CD4-positive, alpha-beta T cell (primary cell): ENCODE measurements at regions of chr17 and their contacts with region 1.

Region 1: DNA sequence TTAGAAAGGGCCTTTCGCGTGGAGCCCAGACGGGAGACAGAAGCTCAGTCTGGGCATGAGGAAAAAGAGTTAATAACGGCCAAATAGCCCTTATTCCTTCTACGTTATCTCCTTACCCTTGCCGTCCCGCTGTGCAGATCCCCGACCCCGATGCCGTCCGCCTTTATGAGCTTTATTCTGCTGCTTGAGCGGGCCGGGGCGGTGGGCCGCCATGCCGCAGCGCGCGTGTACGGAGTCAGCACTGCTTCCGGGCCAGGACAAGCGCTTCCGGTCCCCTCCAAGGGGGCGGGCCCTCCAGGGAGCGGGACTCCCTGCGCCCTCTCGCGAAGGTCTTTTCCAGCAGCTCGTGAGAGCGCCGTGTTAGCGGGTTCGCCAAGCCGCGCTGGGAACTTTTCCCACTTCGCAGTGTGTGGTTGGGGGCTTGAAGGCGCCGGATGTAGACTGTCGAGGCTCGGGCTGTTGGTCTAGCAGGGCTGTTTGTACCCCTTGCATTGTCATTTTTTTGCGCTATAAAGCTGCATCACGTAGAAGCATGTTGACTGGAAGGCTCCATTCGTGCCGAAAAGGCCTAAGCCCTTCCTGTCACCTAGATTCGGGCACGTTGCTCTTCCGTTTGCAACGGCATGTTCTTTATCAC is at the start of gene TSR1:
- DNase-seq: peak; percentile 79 to 94 (median 86)
- ATAC-seq: peak; percentile 83
- H3K4me3 ChIP-seq: peak within 1 kb of the TSS; percentile 91
- H3K4me3 Mint-ChIP-seq: no peak within 1 kb of the TSS
- H3K27ac ChIP-seq: peak within 1 kb of the TSS; percentile 70 to 78
- H3K27ac Mint-ChIP-seq: peak within 1 kb of the TSS; percentile 94
- H3K4me1 ChIP-seq: peaks cover 30% of the 10 kb centered on the region
- H3K4me1 Mint-ChIP-seq: peaks cover 30% of the 10 kb centered on the region
- H3K27me3 ChIP-seq: no peaks in the 10 kb centered on the region
- H3K27me3 Mint-ChIP-seq: no peaks in the 10 kb centered on the region
- CTCF ChIP-seq: peak; percentile 30
- total RNA-seq, gene TSR1: 29.6 to 31.9 TPM

Region 2: GRCh38 chr17:2070241-2071023 is 265.9 kb before region 1 on chr17:
- CTCF ChIA-PET with region 1: no interaction called
- POLR2A ChIA-PET with region 1: no interaction called
- intact Hi-C with region 1: no loop called
- DNase-seq: peak in 1 of 14 experiments; percentile 42
- ATAC-seq: peak; percentile 69
- H3K4me3 ChIP-seq: no peak overlapping the region
- H3K4me3 Mint-ChIP-seq: no peak overlapping the region
- H3K27ac ChIP-seq: no peak overlapping the region
- H3K27ac Mint-ChIP-seq: peak overlapping the region; percentile 12
- H3K4me1 ChIP-seq: peaks cover 38% of the 10 kb centered on the region
- H3K4me1 Mint-ChIP-seq: peaks cover 4% of the 10 kb centered on the region
- H3K27me3 ChIP-seq: no peaks in the 10 kb centered on the region
- H3K27me3 Mint-ChIP-seq: peaks cover 5% of the 10 kb centered on the region
- CTCF ChIP-seq: no peak

Region 3: DNA sequence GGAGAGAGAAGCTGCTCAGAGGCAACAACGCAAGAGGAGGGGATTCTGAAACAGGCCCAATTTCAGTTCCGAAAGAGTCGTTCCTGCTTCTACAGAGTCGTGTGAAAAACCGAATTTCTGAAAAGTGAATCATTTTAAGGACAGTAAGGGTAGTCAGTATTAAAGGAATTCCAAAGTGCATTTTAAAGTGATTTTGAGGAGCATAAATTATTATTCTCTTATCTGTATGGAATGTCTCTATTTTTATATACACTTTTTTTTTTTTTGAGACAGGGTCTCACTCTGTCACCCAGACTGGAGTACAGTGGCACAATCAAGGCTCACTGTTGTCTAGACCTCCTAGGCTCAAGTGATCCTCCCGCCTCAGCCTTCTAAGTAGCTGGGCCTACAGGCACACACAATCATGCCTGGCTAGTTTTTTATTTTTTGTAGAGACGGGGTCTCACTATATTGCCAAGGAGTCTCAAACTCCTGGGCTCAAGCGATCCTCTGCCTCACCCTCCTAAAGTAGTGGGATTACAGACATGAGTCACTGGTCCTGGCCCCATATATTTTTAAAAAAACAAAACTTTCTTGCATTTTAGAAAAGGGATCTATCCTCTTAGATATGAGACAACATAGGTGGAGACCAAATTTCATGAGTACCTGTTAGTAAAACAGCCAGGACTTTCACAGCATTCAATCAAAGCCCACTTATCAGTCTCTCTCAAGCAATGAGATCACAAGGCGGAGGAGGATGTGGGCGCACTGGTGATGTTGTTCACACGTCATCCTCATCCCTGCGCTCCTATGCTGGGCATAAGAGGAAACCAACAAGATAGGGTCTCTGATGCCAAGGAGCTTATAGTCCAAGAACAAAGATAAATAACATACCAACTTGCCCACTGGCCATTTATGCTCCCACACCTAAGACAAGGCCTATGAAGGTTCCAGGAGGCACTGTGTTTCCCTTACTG is 85.9 kb before region 1 on chr17:
- CTCF ChIA-PET with region 1: no interaction called
- POLR2A ChIA-PET with region 1: no interaction called
- intact Hi-C with region 1: no loop called
- DNase-seq: peak in 8 of 14 experiments; percentile 19 to 70 (median 54)
- ATAC-seq: peak; percentile 78
- H3K4me3 ChIP-seq: no peak overlapping the region
- H3K4me3 Mint-ChIP-seq: peak overlapping the region; percentile 1
- H3K27ac ChIP-seq: no peak overlapping the region
- H3K27ac Mint-ChIP-seq: peak overlapping the region; percentile 78
- H3K4me1 ChIP-seq: peaks cover 25% of the 10 kb centered on the region
- H3K4me1 Mint-ChIP-seq: peaks cover 57% of the 10 kb centered on the region
- H3K27me3 ChIP-seq: no peaks in the 10 kb centered on the region
- H3K27me3 Mint-ChIP-seq: no peaks in the 10 kb centered on the region
- CTCF ChIP-seq: no peak

Region 4: GRCh38 chr17:2279707-2280106 is 56.6 kb before region 1 on chr17:
- CTCF ChIA-PET with region 1: no interaction called
- POLR2A ChIA-PET with region 1: no interaction called
- intact Hi-C with region 1: no loop called
- DNase-seq: no peak
- ATAC-seq: no peak
- H3K4me3 ChIP-seq: no peak overlapping the region
- H3K4me3 Mint-ChIP-seq: peak overlapping the region; percentile 11
- H3K27ac ChIP-seq: no peak overlapping the region
- H3K27ac Mint-ChIP-seq: peak overlapping the region; percentile 67
- H3K4me1 ChIP-seq: peaks cover 28% of the 10 kb centered on the region
- H3K4me1 Mint-ChIP-seq: peaks cover 58% of the 10 kb centered on the region
- H3K27me3 ChIP-seq: no peaks in the 10 kb centered on the region
- H3K27me3 Mint-ChIP-seq: no peaks in the 10 kb centered on the region
- CTCF ChIP-seq: no peak

Region 5: GRCh38 chr17:2303204-2304188 is 32.8 kb before region 1 on chr17 and contains the starts of genes SMG6 and SRR:
- CTCF ChIA-PET with region 1: no interaction called
- POLR2A ChIA-PET with region 1: interaction called, 50 read pairs
- intact Hi-C with region 1: loop called in 1 of 2 experiments (anchors 1 kb)
- DNase-seq: peak; percentile 91 to 98 (median 95)
- ATAC-seq: peak; percentile 91
- H3K4me3 ChIP-seq: peak within 1 kb of the TSS; percentile 94
- H3K4me3 Mint-ChIP-seq: peak within 1 kb of the TSS; percentile 98
- H3K27ac ChIP-seq: peak within 1 kb of the TSS; percentile 52 to 84
- H3K27ac Mint-ChIP-seq: peak within 1 kb of the TSS; percentile 90
- H3K4me1 ChIP-seq: peaks cover 30% of the 10 kb centered on the region
- H3K4me1 Mint-ChIP-seq: peaks cover 55% of the 10 kb centered on the region
- H3K27me3 ChIP-seq: no peaks in the 10 kb centered on the region
- H3K27me3 Mint-ChIP-seq: no peaks in the 10 kb centered on the region
- CTCF ChIP-seq: no peak
- total RNA-seq, gene SMG6: 39.3 to 39.7 TPM
- total RNA-seq, gene SRR: 2.5 to 2.8 TPM

Region 6: DNA sequence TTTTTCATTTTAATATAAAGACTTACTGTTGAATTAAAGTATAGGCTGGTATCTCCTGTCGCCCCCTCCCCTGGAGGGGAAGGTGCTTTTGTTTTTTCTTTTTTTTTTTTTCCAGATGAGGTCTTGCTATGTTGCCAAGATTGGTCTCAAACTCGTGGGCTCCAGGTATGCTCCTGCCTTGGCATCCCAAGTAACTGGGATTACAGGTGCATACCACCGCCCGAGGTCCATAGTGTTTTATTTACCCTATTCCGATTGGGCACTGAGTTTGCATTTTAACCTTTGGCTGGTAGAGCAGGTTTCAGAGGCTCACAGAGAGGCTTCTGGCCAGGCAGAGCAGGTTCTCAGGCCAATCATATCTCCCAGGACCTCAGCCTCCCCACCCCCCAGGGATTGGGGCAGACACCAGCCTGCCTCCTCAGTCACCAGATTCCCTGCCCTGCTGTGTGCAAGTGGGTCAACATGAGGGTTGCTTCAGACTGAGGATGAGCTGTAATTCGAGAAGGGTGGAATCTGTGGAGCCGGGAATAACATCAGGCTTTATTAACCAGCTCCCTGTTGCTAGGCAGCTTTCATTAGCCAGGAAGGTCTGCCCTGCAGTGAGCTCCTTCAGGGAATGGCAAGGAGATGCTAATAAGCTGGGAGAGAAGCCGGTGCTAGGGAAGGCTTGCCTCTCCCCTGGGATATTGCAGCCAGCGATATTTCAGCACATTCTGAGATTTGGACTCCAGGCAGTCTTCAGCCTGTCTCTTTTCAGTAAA is 11.4 kb after region 1 on chr17:
- CTCF ChIA-PET with region 1: interaction called, 18 read pairs
- POLR2A ChIA-PET with region 1: interaction called, 48 read pairs
- intact Hi-C with region 1: no loop called
- DNase-seq: no peak
- ATAC-seq: no peak
- H3K4me3 ChIP-seq: no peak overlapping the region
- H3K4me3 Mint-ChIP-seq: no peak overlapping the region
- H3K27ac ChIP-seq: no peak overlapping the region
- H3K27ac Mint-ChIP-seq: no peak overlapping the region
- H3K4me1 ChIP-seq: peaks cover 8% of the 10 kb centered on the region
- H3K4me1 Mint-ChIP-seq: peaks cover 6% of the 10 kb centered on the region
- H3K27me3 ChIP-seq: no peaks in the 10 kb centered on the region
- H3K27me3 Mint-ChIP-seq: no peaks in the 10 kb centered on the region
- CTCF ChIP-seq: no peak

Region 7: GRCh38 chr17:2354311-2354710 is 18.0 kb after region 1 on chr17:
- CTCF ChIA-PET with region 1: interaction called, 18 read pairs
- POLR2A ChIA-PET with region 1: interaction called, 48 read pairs
- intact Hi-C with region 1: loop called (anchors 1 kb)
- DNase-seq: no peak
- ATAC-seq: no peak
- H3K4me3 ChIP-seq: no peak overlapping the region
- H3K4me3 Mint-ChIP-seq: peak overlapping the region; percentile 8
- H3K27ac ChIP-seq: no peak overlapping the region
- H3K27ac Mint-ChIP-seq: peak overlapping the region; percentile 65
- H3K4me1 ChIP-seq: peaks cover 20% of the 10 kb centered on the region
- H3K4me1 Mint-ChIP-seq: peaks cover 18% of the 10 kb centered on the region
- H3K27me3 ChIP-seq: no peaks in the 10 kb centered on the region
- H3K27me3 Mint-ChIP-seq: no peaks in the 10 kb centered on the region
- CTCF ChIP-seq: no peak

Region 8: GRCh38 chr17:2392252-2393173 is 56.2 kb after region 1 on chr17:
- CTCF ChIA-PET with region 1: interaction called, 6 read pairs
- POLR2A ChIA-PET with region 1: interaction called, 17 read pairs
- intact Hi-C with region 1: no loop called
- DNase-seq: peak; percentile 93 to 99 (median 97)
- ATAC-seq: peak; percentile 64
- H3K4me3 ChIP-seq: peak overlapping the region; percentile 94
- H3K4me3 Mint-ChIP-seq: peak overlapping the region; percentile 99
- H3K27ac ChIP-seq: peak overlapping the region; percentile 98 to 100
- H3K27ac Mint-ChIP-seq: peak overlapping the region; percentile 99
- H3K4me1 ChIP-seq: peaks cover 67% of the 10 kb centered on the region
- H3K4me1 Mint-ChIP-seq: peaks cover 66% of the 10 kb centered on the region
- H3K27me3 ChIP-seq: no peaks in the 10 kb centered on the region
- H3K27me3 Mint-ChIP-seq: no peaks in the 10 kb centered on the region
- CTCF ChIP-seq: no peak

Region 9: GRCh38 chr17:2401426-2402221 is 65.3 kb after region 1 on chr17:
- CTCF ChIA-PET with region 1: interaction called, 5 read pairs
- POLR2A ChIA-PET with region 1: interaction called, 66 read pairs
- intact Hi-C with region 1: loop called (anchors 2 kb)
- DNase-seq: peak; percentile 97 to 99 (median 99)
- ATAC-seq: peak; percentile 58
- H3K4me3 ChIP-seq: peak overlapping the region; percentile 93
- H3K4me3 Mint-ChIP-seq: peak overlapping the region; percentile 100
- H3K27ac ChIP-seq: peak overlapping the region; percentile 93 to 100
- H3K27ac Mint-ChIP-seq: peak overlapping the region; percentile 99
- H3K4me1 ChIP-seq: peaks cover 51% of the 10 kb centered on the region
- H3K4me1 Mint-ChIP-seq: peaks cover 47% of the 10 kb centered on the region
- H3K27me3 ChIP-seq: no peaks in the 10 kb centered on the region
- H3K27me3 Mint-ChIP-seq: no peaks in the 10 kb centered on the region
- CTCF ChIP-seq: no peak

Region 10: DNA sequence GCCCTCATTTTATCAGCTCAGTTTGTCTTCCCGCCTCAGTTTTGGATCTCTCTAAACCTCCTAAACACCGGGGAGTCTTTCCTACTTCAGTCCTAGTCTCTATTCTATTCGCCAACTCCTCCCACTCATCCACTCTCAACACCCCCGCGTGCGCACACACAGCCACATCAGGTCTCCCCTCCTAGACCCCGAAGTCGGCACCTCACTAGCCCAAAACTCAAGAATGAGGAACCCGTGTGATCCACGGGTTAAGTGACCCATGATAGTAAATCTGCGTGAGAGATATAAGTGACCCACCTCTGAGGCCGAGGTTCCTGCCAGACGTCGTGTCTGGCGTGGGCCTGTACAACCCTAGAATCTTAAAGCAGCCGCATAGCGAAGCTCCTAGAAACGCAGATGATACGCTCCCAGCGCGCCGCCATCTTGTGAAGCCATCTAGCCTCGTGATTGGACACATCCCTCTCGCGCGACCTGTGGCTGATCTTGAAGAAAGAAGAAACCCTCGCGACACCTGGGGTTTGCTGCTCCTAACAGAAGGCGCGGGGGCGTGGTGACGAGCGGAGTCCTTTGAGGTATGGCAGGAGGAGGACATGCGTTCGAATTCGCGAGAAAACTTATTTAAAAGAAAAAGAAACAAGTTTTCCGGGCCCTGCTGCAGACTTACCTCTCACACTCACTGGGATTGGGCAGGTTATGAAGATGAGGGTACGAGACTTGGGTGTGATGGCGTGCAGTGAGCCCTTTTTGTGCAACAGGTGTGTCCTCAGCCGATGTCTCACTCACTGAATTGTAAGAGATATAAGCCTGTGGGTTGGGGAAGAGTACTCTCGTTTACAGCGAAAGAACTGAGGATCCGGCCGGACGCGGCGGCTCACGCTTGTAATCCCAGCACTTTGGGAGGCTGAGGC is 175.4 kb after region 1 on chr17 and contains the start of gene METTL16:
- CTCF ChIA-PET with region 1: no interaction called
- POLR2A ChIA-PET with region 1: interaction called, 8 read pairs
- intact Hi-C with region 1: loop called in 1 of 2 experiments (anchors 5 kb)
- DNase-seq: peak; percentile 91 to 99 (median 96)
- ATAC-seq: peak; percentile 98
- H3K4me3 ChIP-seq: peak within 1 kb of the TSS; percentile 70
- H3K4me3 Mint-ChIP-seq: no peak within 1 kb of the TSS
- H3K27ac ChIP-seq: peak within 1 kb of the TSS; percentile 92 to 96
- H3K27ac Mint-ChIP-seq: no peak within 1 kb of the TSS
- H3K4me1 ChIP-seq: peaks cover 34% of the 10 kb centered on the region
- H3K4me1 Mint-ChIP-seq: peaks cover 12% of the 10 kb centered on the region
- H3K27me3 ChIP-seq: no peaks in the 10 kb centered on the region
- H3K27me3 Mint-ChIP-seq: no peaks in the 10 kb centered on the region
- CTCF ChIP-seq: no peak
- total RNA-seq, gene METTL16: 55.7 to 58.0 TPM